HepG2 (cell line): ENCODE measurements at regions of chr6 and their contacts with region 1.

Region 1: GRCh38 chr6:140105857-140106256 is 731.4 kb upstream of the CITED2 start:
- DNase-seq: peak; percentile 39
- ATAC-seq: peak; percentile 94
- H3K4me3 ChIP-seq: peak overlapping the region; percentile 11 to 38 (median 24); a peak in 2 of 6 replicates
- H3K27ac ChIP-seq: no peak overlapping the region
- H3K4me1 ChIP-seq: 0 out of 2 replicates have a peak, but pooled peaks cover 10% of the 10 kb centered on the region
- H3K27me3 ChIP-seq: no peaks in the 10 kb centered on the region
- CTCF ChIP-seq: peak; percentile 27
- EP300 ChIP-seq: no peak
- POLR2A ChIP-seq: no peak
- RAD21 ChIP-seq: no peak

Region 2: GRCh38 chr6:139881728-139882211 is 224.1 kb before region 1 on chr6:
- CTCF ChIA-PET with region 1: no interaction called
- POLR2A ChIA-PET with region 1: no interaction called
- in situ Hi-C with region 1: no loop called
- intact Hi-C with region 1: loop called (anchors 10 kb)
- DNase-seq: peak; percentile 34
- ATAC-seq: peak; percentile 88
- H3K4me3 ChIP-seq: no peak overlapping the region
- H3K27ac ChIP-seq: no peak overlapping the region
- H3K4me1 ChIP-seq: no peaks in the 10 kb centered on the region
- H3K27me3 ChIP-seq: no peaks in the 10 kb centered on the region
- CTCF ChIP-seq: peak; percentile 55
- EP300 ChIP-seq: no peak
- POLR2A ChIP-seq: no peak
- RAD21 ChIP-seq: peak; percentile 37; the same call in 1 of the 2 replicates

Region 3: GRCh38 chr6:140138311-140139010 is 32.6 kb after region 1 on chr6:
- CTCF ChIA-PET with region 1: no interaction called
- POLR2A ChIA-PET with region 1: no interaction called
- in situ Hi-C with region 1: no loop called
- intact Hi-C with region 1: no loop called
- DNase-seq: no peak
- ATAC-seq: no peak
- H3K4me3 ChIP-seq: no peak overlapping the region
- H3K27ac ChIP-seq: no peak overlapping the region
- H3K4me1 ChIP-seq: no peaks in the 10 kb centered on the region
- H3K27me3 ChIP-seq: no peaks in the 10 kb centered on the region
- CTCF ChIP-seq: no peak
- EP300 ChIP-seq: no peak
- POLR2A ChIP-seq: no peak
- RAD21 ChIP-seq: no peak